AG04449 (cell line): ENCODE measurements at regions of chr5 and their contacts with region 1.

Region 1: DNA sequence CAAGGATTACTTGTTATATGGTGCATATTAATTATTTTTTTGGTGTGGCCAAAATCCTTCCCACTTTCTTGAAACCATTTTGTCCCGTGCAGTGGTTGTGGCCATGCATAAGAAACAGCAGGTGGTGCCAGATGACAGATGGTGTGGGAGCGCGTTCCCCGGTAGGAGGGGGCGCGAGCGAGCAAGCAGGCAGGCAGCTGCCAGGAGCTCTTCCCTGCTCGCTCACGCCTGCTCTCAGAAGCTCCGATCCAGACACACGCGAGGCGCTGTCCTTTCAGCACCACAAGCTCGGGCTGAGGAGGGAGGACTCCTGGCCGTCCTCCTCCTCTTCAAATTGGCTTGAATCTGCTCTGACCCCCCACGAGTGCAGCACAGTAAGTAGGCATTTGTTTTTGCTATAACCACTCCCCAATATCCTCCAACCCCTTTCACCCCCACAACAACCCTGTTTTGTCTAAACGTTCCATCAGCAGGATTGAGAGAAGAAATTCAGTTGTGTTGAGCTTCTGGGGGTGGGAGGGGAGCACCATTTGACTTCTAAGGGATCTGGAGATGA is at the start of gene NSG2:
- DNase-seq: peak; percentile 41
- H3K4me3 ChIP-seq: no peak within 1 kb of the TSS
- CTCF ChIP-seq: peak; percentile 71

Region 2: DNA sequence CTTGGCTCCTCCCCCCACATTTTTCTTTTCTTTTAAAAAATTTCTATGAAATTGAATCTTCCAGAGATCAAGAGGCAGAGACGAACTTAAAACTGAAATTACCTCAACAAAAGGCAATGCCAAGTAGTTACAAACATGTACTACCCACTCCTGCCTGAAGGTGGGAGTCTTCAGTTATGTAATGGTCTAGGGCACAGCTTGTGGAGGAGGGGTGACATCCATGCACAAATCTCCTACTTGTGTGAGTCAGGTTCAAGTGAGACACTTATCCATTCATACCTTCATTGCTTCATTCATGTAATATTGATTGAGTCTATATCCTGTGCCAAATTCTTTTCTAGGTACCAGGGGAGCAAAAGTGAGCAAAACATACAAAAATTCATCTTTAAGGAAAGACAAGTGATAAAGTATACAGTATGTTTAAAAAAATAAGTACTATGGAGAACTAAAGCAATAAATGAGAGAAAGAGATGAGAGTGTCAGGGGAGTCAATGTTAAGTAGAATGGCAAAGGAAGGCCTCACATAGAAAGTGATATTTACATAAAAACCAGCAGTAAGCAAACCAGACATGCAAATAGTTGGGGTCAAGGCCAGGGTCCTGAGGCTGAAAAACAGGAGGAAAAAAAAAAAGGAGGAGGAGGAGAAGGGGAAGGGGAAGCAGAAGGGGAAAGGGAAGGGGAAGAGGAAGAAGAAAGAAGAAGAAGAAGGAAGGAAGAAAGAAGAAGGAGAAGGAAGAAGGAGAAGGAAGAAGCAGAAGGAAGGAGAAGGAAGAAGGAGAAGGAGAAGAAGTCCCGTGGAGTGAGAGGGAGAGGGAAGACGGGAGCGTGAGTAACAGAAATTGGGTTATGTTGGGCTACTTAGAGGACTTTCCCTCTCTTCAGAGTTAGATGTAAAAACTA is 24.9 kb before region 1 on chr5:
- CTCF ChIA-PET with region 1: interaction called, 13 read pairs
- POLR2A ChIA-PET with region 1: no interaction called
- DNase-seq: no peak
- H3K4me3 ChIP-seq: no peak overlapping the region
- CTCF ChIP-seq: peak; percentile 60

Region 3: GRCh38 chr5:174030289-174030688 is 15.3 kb before region 1 on chr5:
- CTCF ChIA-PET with region 1: interaction called, 13 read pairs
- POLR2A ChIA-PET with region 1: no interaction called
- DNase-seq: no peak
- H3K4me3 ChIP-seq: no peak overlapping the region
- CTCF ChIP-seq: no peak

Region 4: DNA sequence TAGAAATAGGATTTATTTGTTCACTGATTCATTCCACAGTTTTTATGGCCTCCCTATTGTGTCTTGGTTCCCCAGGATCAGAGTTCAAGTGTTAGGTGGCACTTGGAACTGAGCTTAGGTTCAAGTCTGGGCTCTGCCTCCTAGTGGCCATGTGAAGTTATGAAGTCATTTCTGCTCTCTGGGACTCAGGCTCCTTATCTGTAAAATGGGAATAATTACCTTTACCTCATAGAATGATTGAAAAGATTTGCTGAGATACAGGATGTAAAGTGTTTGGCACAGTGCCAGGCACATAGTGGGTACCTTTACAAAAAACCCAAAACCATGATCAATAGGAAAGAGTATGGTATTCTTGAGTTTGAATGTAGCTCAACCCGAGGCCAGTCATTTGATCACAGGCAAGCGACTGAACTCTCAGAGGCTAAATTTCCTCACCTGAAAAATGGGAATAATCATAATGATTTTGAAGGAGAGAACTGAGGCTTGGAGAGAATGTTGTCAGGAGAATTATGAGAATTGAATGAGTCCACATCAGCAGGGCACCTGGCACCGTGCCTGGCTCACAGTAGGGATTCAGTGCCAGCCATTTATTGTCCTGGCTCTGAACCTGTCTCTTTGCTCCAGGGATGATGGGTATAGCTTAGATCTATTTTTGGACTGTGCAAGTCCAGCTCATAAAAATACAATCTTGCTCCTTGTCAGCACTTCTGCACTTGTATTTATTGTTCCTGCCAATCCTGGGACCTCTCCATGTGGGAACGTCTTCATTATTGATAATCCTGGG is 10.7 kb after region 1 on chr5:
- CTCF ChIA-PET with region 1: interaction called, 19 read pairs
- POLR2A ChIA-PET with region 1: no interaction called
- DNase-seq: no peak
- H3K4me3 ChIP-seq: no peak overlapping the region
- CTCF ChIP-seq: no peak

Region 5: DNA sequence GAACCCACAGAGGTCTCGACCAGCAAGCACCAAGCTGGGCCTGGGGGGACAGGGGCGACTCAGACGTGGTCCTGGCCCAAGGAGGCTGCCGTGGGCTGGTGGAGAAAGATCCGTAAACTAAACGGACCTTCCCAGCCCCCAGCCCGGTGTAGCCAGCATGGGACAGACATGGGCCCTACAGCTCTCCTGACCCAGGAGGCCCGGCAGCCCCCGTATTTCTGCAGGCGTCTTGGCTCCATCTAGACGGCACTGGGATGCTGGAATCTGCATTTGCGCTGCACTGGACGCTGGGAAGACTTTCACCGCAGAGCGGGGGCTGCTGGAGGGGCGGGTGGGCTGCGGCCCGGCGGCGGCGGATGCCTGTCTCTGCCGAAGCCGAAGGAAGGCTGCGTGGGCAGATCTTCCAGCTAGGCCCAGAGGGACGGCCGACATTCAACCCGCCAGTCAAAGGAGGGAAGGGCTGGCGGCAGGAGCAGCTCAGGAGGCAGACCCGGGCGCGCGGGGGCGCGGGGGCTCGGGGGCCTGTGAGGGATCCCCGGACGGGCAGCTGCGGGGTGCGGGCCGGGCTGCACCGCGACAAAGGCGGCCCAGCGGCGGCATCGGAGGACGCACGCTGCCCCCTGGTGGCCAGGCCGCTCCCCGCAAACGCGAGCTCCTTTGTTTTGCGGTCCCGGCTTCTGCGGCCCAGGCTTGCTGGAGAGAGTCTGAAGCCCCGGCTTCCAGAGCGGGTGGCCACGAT is 266.2 kb after region 1 on chr5:
- CTCF ChIA-PET with region 1: interaction called, 509 read pairs
- POLR2A ChIA-PET with region 1: interaction called, 3 read pairs
- DNase-seq: no peak
- H3K4me3 ChIP-seq: peak overlapping the region; percentile 49
- CTCF ChIP-seq: peak; percentile 90

Region 6: DNA sequence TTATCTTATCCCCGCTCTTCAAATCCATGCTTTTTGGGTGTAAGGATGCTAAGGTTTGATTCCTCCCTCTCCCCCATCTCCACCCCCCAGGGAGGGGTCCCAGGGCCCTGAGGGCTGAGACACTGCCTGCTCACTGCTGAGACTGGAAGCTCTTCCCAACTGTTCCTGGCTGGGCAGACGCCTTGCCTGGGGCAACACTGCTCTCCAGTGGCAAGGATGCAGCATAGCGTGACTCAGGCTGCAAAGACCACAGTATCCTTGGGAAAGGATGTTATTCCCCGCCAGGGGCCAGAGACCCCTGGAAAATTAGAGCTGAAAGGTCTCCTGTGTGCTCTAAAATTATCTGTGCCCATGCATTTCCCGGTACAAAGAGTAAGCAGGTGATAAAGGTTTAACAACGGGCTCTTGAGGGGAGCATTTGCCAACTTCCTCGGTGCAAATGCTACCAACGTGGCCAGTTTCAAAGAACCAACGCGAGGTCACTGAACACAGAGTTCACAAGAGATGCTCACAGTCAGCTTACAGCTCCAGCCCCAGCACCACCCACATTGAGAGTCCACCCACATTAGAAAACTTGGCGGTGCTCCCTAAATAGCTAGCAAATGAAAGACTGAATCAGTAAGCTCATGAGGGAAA is 271.8 kb after region 1 on chr5:
- CTCF ChIA-PET with region 1: interaction called, 509 read pairs
- POLR2A ChIA-PET with region 1: interaction called, 3 read pairs
- DNase-seq: no peak
- H3K4me3 ChIP-seq: no peak overlapping the region
- CTCF ChIP-seq: peak; percentile 93